ENCODE measurements at regions of chr17 and their contacts with region 1.

Region 1: DNA sequence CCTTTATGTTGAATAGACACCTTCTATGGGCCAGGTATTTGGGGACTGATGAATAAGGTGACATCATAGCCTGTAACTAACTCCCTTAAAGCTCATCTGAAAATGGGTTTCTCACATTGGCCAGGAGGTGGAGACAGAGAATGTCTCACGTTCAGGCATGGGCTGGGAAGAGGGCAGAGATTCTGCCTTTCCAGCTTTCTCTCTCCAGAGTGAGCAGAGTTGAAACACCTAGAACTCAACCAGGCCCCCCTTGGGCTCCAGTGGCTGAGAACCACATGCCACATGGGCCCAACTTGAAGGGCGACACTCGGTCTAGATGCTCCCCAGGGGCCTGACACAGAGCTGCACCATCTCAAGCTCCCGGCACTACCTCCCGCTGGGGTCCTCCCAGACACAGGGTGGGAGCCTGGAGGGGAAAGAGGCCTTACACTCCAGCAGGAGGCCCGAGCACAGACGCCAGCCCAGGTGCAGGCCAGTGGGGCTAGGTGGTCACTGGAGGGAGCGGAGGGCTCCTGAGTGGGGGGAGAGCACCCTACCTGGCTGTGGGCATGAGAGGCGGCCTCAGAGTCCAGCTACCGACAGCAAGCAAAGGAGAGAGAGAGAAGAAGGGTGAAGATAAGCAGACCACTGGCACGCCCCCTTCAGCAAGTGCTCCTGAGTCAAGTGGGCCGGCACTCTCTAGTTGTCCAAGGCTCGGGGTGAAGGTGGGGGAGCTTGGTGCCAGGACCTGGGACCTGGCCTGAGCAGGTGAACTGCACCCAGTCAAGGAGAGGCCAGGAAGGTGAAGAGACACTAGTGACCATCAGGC is 55.9 kb downstream of the MYO18A start:
- DNase-seq: peak; percentile 64 to 76
- H3K4me3 ChIP-seq: no peak overlapping the region
- H3K27ac ChIP-seq: peak overlapping the region; percentile 81
- H3K4me1 ChIP-seq: peaks cover 32% of the 10 kb centered on the region
- H3K27me3 ChIP-seq: no peaks in the 10 kb centered on the region
- CTCF ChIP-seq: peak; percentile 78

Region 2: DNA sequence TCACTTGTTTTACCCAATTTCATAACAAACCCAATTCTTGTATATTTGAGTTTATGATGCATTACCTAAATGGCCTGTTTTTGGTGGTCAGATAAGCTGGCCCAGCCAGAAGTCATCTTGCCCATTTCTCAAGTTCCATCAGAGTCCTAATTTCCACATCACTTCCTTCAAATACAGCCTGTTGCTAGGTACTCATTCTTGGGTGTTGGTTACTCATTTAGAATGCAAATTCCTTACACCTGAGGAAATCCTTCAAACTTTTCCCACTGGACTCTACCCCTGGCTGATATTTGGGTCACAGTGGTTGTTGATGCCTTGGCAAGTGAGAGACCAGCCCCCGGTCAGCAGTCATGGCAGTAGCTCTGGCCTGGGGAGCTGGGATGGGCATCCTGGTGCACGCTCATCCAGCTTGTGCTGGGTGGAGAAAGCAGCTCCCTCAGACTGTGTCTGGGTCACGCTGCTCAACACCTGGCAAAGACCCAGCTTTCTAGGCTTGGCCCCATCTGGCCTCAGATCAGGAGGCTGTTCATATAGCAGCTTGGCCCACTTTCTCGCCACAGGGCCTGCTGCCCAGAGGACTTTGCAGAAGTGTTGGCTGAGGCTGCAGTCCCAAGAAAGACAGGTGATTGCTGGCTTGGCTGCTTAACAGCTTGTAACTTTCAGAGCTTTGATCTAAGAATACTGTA is 1804.6 kb before region 1 on chr17:
- CTCF ChIA-PET with region 1: no interaction called
- POLR2A ChIA-PET with region 1: no interaction called
- intact Hi-C with region 1: no loop called
- DNase-seq: peak; percentile 23 to 68
- H3K4me3 ChIP-seq: no peak overlapping the region
- H3K27ac ChIP-seq: no peak overlapping the region
- H3K4me1 ChIP-seq: peaks cover 23% of the 10 kb centered on the region
- H3K27me3 ChIP-seq: no peaks in the 10 kb centered on the region
- CTCF ChIP-seq: no peak

Region 3: DNA sequence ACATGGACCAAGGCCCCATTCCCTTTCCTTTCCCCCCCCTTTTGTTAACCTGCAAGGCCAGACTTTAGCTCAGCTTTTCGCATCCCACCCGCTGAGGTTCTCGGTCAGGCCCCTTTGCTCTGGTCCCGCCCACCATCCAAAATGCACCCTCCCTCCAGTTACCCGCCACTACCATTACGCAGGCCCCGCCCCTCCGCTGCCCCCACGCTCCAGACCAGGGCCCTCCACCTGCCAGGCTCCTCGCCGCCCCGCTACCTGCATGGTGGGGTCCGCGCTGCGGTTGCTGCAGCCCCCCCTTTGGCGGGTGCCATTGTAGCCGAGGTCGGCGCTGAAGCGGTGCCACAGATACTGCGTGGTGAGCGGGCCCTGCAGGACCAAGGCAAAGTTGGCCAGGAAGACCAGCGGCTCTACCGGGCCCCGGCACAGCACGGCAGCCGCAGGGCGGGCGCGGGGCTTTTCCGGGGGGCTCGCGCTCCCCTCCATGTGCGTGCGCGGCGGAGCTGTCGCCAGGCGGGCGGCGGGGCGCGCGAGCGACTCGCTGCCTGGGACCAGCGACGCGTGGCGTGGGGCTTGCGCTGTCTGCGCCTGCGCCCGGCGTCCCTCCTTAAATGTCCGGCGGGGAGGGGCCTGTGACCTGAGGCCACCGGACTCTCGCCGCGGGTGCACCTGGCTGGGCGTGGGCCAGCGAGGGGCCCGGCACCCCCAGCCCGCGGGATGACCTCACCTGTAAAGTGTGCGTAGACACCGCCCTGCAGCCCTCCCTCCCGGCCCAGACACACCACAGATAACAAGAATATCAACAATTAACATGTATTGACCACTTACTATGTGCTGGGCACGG is 718.5 kb before region 1 on chr17 and contains the start of gene SLC46A1:
- CTCF ChIA-PET with region 1: no interaction called
- POLR2A ChIA-PET with region 1: interaction called, 14 read pairs
- intact Hi-C with region 1: no loop called
- DNase-seq: peak; percentile 55 to 73
- H3K4me3 ChIP-seq: peak within 1 kb of the TSS; percentile 99
- H3K27ac ChIP-seq: no peak within 1 kb of the TSS
- H3K4me1 ChIP-seq: peaks cover 11% of the 10 kb centered on the region
- H3K27me3 ChIP-seq: no peaks in the 10 kb centered on the region
- CTCF ChIP-seq: no peak
- total RNA-seq, gene SLC46A1: 12.6 and 14.9 TPM in 2 replicates

Region 4: DNA sequence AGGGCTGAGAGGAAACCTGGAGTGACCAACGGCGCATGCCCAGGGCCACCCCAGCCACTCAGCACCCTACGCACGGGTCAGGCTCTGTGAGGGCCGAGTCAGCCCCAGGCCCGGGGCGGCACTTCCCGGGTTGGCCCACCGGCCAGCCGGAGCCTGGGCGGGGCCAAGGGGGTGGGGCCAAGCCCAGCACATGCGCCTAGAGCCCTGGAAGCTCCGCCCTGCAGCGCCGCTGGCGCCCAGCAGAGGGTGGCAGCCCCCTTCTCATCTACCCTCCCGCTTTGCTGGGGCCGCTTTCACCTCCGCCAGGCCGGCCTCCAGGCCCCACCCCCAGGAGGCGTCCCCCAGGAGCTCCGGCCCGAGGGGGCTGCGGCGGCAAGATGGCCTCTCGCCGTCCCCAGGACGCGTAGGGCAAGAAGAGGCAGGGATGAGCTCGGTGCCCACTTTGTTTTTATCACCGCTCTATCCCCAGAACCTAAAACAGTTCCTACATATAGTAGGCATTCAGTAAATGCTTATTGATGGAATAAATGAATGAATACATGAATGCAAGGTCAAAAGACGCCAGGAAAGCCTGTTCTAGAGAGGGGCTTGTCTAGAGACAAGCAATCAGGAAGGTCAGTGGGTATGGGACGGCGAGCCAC is 24.6 kb after region 1 on chr17:
- CTCF ChIA-PET with region 1: interaction called, 29 read pairs
- POLR2A ChIA-PET with region 1: interaction called, 35 read pairs
- intact Hi-C with region 1: loop called (anchors 1 kb)
- DNase-seq: peak; percentile 72 to 94
- H3K4me3 ChIP-seq: peak overlapping the region; percentile 41; the same call in 1 of the 2 replicates
- H3K27ac ChIP-seq: peak overlapping the region; percentile 91
- H3K4me1 ChIP-seq: peaks cover 70% of the 10 kb centered on the region
- H3K27me3 ChIP-seq: no peaks in the 10 kb centered on the region
- CTCF ChIP-seq: peak; percentile 90

Region 5: DNA sequence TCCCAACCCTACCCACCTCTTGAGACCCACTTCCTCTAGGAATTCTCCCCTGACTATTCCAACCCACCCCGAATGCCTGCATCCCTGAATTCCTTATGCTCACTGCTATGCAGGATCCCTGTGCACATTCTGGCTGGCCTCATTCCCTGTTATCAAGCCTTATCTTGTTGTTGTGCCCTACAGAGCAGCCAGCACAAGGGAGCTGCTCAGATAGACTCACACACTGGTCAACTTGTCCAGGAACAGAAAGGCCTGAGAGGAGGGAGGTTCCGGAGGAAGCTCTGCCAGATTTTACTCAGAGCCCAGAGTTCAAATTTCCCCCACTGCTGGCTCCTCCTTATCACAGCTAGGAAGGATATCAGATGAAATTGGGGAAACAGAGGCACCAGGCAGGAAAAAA is 80.7 kb after region 1 on chr17:
- CTCF ChIA-PET with region 1: no interaction called
- POLR2A ChIA-PET with region 1: no interaction called
- intact Hi-C with region 1: no loop called
- DNase-seq: no peak
- H3K4me3 ChIP-seq: no peak overlapping the region
- H3K27ac ChIP-seq: no peak overlapping the region
- H3K4me1 ChIP-seq: no peaks in the 10 kb centered on the region
- H3K27me3 ChIP-seq: no peaks in the 10 kb centered on the region
- CTCF ChIP-seq: no peak

Region 6: DNA sequence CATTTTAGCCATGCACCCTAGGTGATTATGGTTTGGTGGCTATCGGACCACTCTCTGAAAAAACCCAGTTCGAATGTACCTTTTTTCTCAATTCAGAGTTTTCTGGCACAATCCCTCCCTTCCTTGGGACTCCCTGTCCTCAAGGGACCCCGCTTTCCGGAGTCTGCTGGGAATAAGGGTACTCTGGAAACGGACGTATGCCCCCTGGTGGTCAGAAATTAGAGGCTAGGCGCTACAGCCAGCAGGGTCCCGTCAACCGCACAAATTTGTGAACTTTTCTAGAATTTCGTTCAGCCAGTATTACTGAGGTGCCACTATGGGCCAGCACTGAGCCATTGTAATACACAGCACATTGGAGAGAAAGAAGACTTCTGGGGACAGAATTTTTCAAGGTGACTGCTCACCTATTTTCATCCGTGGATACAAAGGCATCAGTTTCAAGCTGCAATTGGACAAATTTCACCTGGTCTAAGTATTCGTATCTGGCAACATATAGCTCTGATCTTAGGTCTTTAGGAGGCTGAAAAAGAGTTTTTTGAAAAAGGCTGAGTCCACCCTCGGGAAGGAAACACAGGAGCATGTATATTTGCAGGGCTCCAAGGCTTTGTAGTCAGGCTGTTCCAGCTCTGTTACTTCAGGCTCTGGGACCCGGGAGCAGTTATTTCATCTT is 95.2 kb after region 1 on chr17:
- CTCF ChIA-PET with region 1: interaction called, 11 read pairs
- POLR2A ChIA-PET with region 1: no interaction called
- intact Hi-C with region 1: loop called (anchors 1 kb)
- DNase-seq: peak; percentile 70 to 80
- H3K4me3 ChIP-seq: no peak overlapping the region
- H3K27ac ChIP-seq: no peak overlapping the region
- H3K4me1 ChIP-seq: peaks cover 13% of the 10 kb centered on the region
- H3K27me3 ChIP-seq: no peaks in the 10 kb centered on the region
- CTCF ChIP-seq: peak; percentile 95

Region 7: GRCh38 chr17:29533976-29534375 is 409.7 kb after region 1 on chr17:
- CTCF ChIA-PET with region 1: no interaction called
- POLR2A ChIA-PET with region 1: no interaction called
- intact Hi-C with region 1: loop called (anchors 10 kb)
- DNase-seq: no peak
- H3K4me3 ChIP-seq: no peak overlapping the region
- H3K27ac ChIP-seq: no peak overlapping the region
- H3K4me1 ChIP-seq: no peaks in the 10 kb centered on the region
- H3K27me3 ChIP-seq: no peaks in the 10 kb centered on the region
- CTCF ChIP-seq: no peak